PC-3 (cell line): ENCODE measurements at regions of chr12 and their contacts with region 1.

Region 1: DNA sequence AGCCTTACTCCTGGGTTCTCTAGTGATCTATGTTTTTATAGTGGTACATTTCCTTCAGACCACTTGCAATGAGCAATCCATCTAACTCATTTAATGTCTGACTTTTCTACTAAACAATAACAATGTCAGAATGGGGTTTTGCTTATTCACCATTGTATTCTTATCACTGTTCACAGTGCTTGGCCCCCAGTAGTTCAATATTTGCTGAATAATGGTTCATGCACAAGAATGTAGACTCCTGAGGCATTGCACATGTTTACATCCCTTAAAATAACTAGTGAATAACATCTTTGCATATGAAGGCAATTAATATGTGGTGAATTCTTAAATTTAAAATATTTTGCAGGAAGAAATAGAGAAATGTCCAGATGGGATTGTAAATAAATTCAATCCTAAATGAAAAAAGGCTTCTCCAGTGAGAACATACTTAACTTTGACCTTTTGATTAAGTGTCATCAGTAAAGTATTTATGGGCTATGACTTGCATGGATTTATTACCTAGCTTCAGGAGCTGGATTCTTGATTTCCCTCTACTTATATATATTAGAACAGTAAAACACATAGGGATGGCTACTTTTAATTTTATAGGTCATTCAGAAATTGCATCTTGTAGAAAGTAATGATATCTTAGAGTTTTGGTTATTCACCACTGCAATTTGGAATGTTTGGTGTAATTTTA is 3.4 kb downstream of the CCER1 start:
- DNase-seq: peak; percentile 43
- ATAC-seq: peak; percentile 55; the same call in 1 of the 2 replicates
- H3K4me3 ChIP-seq: no peak overlapping the region
- H3K27ac ChIP-seq: no peak overlapping the region
- H3K4me1 ChIP-seq: peaks cover 10% of the 10 kb centered on the region
- H3K27me3 ChIP-seq: no peaks in the 10 kb centered on the region
- CTCF ChIP-seq: no peak

Region 2: DNA sequence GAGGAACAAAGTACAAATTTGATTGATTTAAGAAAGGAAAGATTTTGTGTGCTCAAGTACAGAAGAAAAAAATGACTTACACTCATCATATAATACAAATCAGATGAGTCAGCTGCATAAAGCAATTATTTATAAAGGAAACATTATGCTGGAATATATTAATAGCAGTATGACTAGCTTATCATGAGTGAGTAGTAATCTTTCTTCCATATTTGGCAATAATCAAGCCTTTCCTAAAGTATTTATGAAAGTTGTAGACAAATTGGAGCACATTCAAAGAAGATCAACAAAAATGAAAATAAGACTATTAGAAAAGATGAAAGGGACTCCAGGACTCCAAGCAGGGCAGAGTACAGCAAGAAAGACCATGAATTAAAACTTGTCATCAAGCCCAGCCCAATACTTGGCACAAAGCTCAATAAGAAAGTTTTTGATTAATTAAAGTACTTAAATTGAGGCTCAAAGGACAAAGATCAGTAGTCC is 29.4 kb before region 1 on chr12:
- CTCF ChIA-PET with region 1: no interaction called
- POLR2A ChIA-PET with region 1: interaction called, 10 read pairs
- intact Hi-C with region 1: no loop called
- DNase-seq: peak; percentile 79
- ATAC-seq: peak; percentile 96
- H3K4me3 ChIP-seq: no peak overlapping the region
- H3K27ac ChIP-seq: peak overlapping the region; percentile 57
- H3K4me1 ChIP-seq: peaks cover 14% of the 10 kb centered on the region
- H3K27me3 ChIP-seq: no peaks in the 10 kb centered on the region
- CTCF ChIP-seq: no peak